HepG2 (cell line): ENCODE measurements at regions of chr1 and their contacts with region 1.

Region 1: GRCh38 chr1:220983877-220984635 is 104.8 kb downstream of the HLX start:
- DNase-seq: peak; percentile 15
- ATAC-seq: peak; percentile 93
- H3K4me3 ChIP-seq: no peak overlapping the region
- H3K27ac ChIP-seq: no peak overlapping the region
- H3K4me1 ChIP-seq: no peaks in the 10 kb centered on the region
- H3K27me3 ChIP-seq: no peaks in the 10 kb centered on the region; a peak in 1 of 5 replicates
- CTCF ChIP-seq: peak; percentile 59
- EP300 ChIP-seq: no peak
- POLR2A ChIP-seq: no peak
- RAD21 ChIP-seq: no peak

Region 2: DNA sequence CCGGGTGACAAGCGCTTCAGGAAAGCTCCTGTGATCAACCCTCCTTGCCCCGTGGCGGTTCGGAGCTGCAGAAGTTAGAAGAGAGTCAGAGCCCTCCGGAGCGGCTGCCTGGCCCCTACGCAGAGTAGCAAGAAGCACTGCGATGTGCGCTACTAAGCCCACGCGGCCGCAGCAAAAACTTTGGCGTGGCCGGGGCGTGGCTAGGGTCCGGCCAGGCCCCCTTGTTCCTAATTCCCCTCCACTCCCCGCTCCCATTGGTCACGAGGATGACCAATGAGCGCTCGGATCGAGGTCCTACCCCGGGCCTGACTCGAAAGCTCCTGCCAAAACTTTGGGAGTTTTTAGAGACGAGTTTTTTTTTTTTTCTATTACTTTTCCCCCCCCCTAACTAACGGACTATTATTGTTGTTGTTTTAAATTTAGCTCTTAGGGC is 105.0 kb before region 1 on chr1 and contains the start of gene HLX:
- CTCF ChIA-PET with region 1: no interaction called
- POLR2A ChIA-PET with region 1: no interaction called
- in situ Hi-C with region 1: no loop called
- intact Hi-C with region 1: loop called (anchors 10 kb)
- DNase-seq: no peak
- ATAC-seq: peak; percentile 67
- H3K4me3 ChIP-seq: peak within 1 kb of the TSS; percentile 50 to 70 (median 63); a peak in 4 of 6 replicates
- H3K27ac ChIP-seq: no peak within 1 kb of the TSS
- H3K4me1 ChIP-seq: peaks cover 15% of the 10 kb centered on the region
- H3K27me3 ChIP-seq: peaks cover 0 to 11% of the 10 kb centered on the region in 2 experiments; a peak in 1 of 5 replicates
- CTCF ChIP-seq: no peak
- EP300 ChIP-seq: no peak
- POLR2A ChIP-seq: no peak
- RAD21 ChIP-seq: no peak
- total RNA-seq, gene HLX: 0.06 and 0.35 TPM in 2 replicates

Region 3: DNA sequence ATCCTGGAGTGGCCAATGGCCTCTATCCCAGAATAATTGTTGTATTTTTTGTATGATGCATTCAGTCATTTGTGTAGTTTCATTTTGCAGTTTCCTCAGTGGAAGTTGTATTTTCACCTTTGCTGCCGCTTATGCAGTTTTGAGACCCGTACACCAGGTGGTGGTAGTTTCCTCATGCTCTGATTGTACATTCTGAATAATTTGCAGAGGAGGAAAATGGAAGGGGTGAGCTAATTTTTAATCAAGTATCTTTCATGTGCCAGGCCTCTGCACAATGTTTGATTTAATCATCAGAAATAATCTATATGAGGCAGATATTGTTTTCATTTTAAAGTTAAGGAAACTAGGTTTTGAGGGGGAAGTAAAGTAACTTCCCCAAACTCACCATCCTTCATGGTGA is 75.3 kb before region 1 on chr1:
- CTCF ChIA-PET with region 1: no interaction called
- POLR2A ChIA-PET with region 1: no interaction called
- in situ Hi-C with region 1: no loop called
- intact Hi-C with region 1: loop called (anchors 2 kb)
- DNase-seq: no peak
- ATAC-seq: peak; percentile 57; the same call in 1 of the 3 replicates
- H3K4me3 ChIP-seq: no peak overlapping the region
- H3K27ac ChIP-seq: no peak overlapping the region
- H3K4me1 ChIP-seq: no peaks in the 10 kb centered on the region
- H3K27me3 ChIP-seq: peaks cover 2 to 31% of the 10 kb centered on the region in 2 experiments; a peak in 3 of 5 replicates
- CTCF ChIP-seq: peak; percentile 54
- EP300 ChIP-seq: no peak
- POLR2A ChIP-seq: no peak
- RAD21 ChIP-seq: 0 out of 2 replicates have a peak, but pooled peaks have one; percentile 22